Heart right ventricle (tissue), 16 donors: ENCODE measurements at regions of chr9 and their contacts with region 1.

Region 1: DNA sequence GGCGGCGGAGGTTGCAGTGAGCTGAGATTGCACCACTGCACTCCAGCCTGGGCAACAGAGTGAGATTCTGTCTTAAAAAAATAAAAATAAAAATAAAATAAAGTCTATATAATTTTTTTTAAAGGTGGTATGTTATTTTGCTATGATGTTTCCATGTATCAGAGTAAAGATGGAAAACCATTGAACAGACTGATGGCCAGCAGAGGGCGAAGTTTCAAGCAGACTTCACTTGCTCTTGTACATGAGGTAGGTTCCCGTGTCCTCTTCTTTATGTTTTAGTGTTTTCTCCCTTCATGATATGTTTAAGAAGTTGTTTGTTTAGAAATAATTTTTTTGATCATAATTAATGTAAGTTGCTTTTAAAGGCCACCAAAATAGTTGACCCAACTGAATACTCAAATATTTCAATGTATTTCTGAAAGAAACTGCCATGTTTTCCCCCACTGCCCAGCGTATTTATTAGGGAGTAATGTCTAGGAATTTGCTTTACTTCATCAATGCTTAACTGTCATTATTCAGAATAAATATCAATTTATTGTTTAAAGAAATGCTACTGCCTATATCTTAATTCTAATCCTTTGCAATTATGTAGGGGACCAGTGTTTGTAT is 146.4 kb downstream of the HACD4 start:
- DNase-seq: peak; percentile 24 to 44
- ATAC-seq: no peak
- H3K4me3 ChIP-seq: no peak overlapping the region
- H3K27ac ChIP-seq: no peak overlapping the region
- H3K4me1 ChIP-seq: no peaks in the 10 kb centered on the region
- H3K27me3 ChIP-seq: no peaks in the 10 kb centered on the region
- CTCF ChIP-seq: peak; percentile 28 to 81 (median 67)

Region 2: DNA sequence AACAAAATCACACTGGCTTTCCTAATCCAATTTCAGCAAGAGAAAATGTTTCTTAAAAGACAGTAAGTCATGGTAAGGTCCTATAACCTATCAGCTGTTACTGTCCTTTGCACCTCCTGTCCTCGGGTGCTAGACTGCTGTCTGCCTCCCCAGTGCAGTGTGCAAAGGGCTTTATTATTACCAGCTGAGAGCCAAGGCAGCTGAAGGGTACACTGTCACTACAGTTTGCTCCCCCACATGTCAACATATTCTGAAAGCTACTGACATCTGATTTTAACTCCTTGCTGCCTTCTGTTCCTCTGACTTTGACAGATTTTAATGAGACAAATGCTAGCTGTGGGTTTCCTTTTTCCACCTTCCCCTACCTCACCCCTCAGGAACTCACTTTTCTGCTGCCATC is 706.9 kb before region 1 on chr9:
- intact Hi-C with region 1: no loop called
- DNase-seq: no peak
- ATAC-seq: no peak
- H3K4me3 ChIP-seq: no peak overlapping the region
- H3K27ac ChIP-seq: no peak overlapping the region
- H3K4me1 ChIP-seq: no peaks in the 10 kb centered on the region
- H3K27me3 ChIP-seq: no peaks in the 10 kb centered on the region
- CTCF ChIP-seq: no peak

Region 3: DNA sequence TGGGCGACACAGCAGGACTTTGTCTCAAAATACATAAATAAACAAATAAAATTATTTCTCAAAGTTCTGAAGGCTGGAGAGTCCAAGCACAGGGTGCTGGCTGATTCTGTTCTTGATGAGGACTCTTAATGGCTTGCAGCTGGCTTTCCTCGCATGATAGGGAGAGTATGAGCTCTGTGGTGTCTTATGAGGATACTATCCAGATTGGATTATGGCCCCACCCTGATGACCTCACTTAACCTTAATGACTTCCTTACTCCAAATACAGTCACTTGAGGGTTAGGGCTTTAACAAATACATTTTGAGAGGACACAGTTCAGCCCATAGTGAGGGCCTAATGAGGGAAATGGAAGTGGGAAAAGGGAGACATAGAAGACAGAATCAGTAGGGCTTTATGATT is 113.4 kb before region 1 on chr9:
- intact Hi-C with region 1: no loop called
- DNase-seq: no peak
- ATAC-seq: no peak
- H3K4me3 ChIP-seq: no peak overlapping the region
- H3K27ac ChIP-seq: no peak overlapping the region
- H3K4me1 ChIP-seq: peaks cover 0 to 9% (median 0%) of the 10 kb centered on the region in 9 donors
- H3K27me3 ChIP-seq: no peaks in the 10 kb centered on the region
- CTCF ChIP-seq: no peak

Region 4: DNA sequence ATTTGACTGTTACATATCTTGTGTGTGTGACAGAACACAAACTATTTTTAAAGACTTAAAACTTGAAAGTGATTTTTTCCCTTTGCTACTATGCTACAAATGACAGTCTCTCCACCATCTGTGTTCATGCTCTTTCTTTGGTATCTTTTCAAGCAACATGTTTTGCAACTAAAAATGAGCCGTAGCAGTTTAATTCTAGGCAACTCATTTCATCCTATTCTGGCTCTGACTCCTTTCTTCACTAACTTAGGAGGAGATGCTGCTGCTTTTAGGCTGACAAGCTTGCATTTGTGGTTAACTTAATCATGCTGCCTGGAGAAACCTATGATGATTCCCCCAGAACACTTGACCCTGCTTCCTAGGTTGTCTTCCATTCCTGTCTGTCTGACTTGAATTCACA is 45.7 kb after region 1 on chr9:
- intact Hi-C with region 1: loop called in 1 of 10 experiments (anchors 10 kb)
- DNase-seq: no peak
- ATAC-seq: no peak
- H3K4me3 ChIP-seq: no peak overlapping the region
- H3K27ac ChIP-seq: no peak overlapping the region
- H3K4me1 ChIP-seq: peaks cover 0 to 18% (median 7%) of the 10 kb centered on the region in 9 donors
- H3K27me3 ChIP-seq: no peaks in the 10 kb centered on the region
- CTCF ChIP-seq: no peak